ENCODE measurements at regions of chr7 and their contacts with region 1.

Region 1: GRCh38 chr7:27150568-27151340 is 1.6 kb downstream of the HOXA3 start:
- DNase-seq: peak; percentile 81 to 91
- ATAC-seq: peak; percentile 92 to 93
- H3K4me3 ChIP-seq: peak overlapping the region; percentile 49
- H3K27ac ChIP-seq: peak overlapping the region; percentile 88 to 90
- H3K4me1 ChIP-seq: peaks cover 16% of the 10 kb centered on the region
- CTCF ChIP-seq: peak; percentile 78
- EP300 ChIP-seq: no peak
- POLR2A ChIP-seq: peak; percentile 56
- RAD21 ChIP-seq: peak; percentile 31 to 55; a peak in 4 of 5 replicates

Region 2: DNA sequence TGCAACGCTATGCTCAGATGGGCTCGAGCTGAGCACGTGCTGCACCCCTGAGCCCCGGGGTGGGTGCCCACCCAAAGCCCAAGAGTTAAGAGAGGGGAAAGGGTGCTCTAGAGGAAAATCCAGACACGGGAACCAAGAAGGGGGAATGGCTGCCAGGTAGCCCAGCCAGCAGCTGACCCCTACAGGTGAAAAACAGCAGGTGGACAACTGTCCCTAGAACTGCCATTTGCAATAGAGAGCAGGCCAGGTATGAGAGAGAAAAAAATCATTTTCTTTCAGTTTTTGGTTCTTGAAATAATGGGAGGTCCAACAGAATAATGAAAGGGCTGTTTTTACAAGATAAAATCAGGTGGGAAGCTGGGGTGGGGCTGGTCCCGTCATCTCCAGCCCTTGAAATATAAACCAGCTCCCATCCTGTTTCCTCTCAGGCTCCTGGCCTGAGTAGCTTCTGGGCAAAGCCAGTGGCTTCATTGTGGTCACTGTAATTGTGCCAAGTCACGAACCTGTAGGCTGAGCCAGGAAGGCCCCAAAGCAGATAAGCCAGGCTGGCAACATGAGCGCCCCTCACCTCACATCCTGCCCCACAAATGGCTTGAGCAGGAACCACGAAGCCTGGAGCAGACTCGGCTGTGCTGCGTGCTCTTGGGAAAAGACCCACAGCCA is 601.3 kb before region 1 on chr7:
- CTCF ChIA-PET with region 1: no interaction called
- POLR2A ChIA-PET with region 1: no interaction called
- DNase-seq: no peak
- ATAC-seq: no peak
- H3K4me3 ChIP-seq: no peak overlapping the region
- H3K27ac ChIP-seq: no peak overlapping the region
- H3K4me1 ChIP-seq: no peaks in the 10 kb centered on the region
- CTCF ChIP-seq: no peak
- EP300 ChIP-seq: no peak
- POLR2A ChIP-seq: no peak
- RAD21 ChIP-seq: no peak

Region 3: DNA sequence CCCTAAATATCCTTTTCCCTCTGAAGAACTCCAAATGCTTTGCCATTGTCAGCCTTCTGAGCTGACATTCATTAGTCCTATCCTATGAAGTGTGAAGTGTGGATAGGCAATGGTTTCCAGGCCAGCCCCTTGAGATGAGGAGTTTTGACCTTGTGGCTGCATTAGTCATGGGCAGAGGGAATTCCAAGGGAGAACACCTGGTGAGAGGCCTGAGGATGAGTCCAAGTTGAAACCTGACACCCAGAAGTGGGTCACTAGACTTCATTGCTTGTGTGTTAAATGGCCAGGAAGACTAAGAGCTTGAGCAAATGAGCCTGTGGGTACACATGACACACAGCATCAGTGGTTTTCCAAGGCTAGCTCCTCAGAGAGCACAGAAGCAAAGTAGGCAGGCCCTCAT is 547.1 kb before region 1 on chr7:
- CTCF ChIA-PET with region 1: no interaction called
- POLR2A ChIA-PET with region 1: no interaction called
- DNase-seq: peak in 1 of 2 experiments; percentile 17
- ATAC-seq: no peak; a peak in 1 of 6 replicates
- H3K4me3 ChIP-seq: no peak overlapping the region
- H3K27ac ChIP-seq: no peak overlapping the region
- H3K4me1 ChIP-seq: no peaks in the 10 kb centered on the region
- CTCF ChIP-seq: no peak
- EP300 ChIP-seq: no peak
- POLR2A ChIP-seq: no peak
- RAD21 ChIP-seq: no peak

Region 4: DNA sequence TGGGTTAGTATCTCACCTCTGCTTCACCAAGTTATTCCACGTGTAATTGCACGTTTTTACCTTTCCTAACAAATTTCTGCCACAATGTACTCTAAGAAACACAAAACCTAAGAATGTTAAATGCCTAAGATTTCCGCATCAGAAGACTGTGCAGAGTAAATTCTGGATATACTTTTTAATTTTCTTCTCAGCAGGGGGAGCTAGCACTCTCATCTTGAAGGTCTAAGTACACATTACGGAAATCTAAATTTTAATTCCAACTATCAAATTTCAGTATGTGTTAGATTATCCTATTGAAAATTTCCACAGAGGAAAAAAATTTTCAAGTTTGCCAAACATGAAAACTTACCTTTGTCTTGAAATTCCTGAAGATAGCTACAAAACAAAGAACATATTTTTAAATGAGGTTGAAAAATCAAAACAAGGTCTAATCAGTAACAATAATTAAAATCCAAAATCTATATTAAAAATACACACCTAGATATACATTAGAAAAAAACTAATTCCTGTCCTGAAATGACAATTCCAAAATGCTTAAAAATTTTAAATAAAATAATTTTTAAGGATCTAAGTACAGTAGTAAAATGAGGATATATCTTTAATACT is 296.9 kb before region 1 on chr7:
- CTCF ChIA-PET with region 1: interaction called, 71 read pairs
- POLR2A ChIA-PET with region 1: no interaction called
- DNase-seq: peak in 1 of 2 experiments; percentile 67
- ATAC-seq: peak; percentile 78 to 86; a peak in 5 of 6 replicates
- H3K4me3 ChIP-seq: no peak overlapping the region
- H3K27ac ChIP-seq: no peak overlapping the region
- H3K4me1 ChIP-seq: peaks cover 9% of the 10 kb centered on the region
- CTCF ChIP-seq: peak; percentile 86
- EP300 ChIP-seq: no peak
- POLR2A ChIP-seq: no peak
- RAD21 ChIP-seq: peak; percentile 79 to 80

Region 5: GRCh38 chr7:27179503-27180430 is 29.0 kb after region 1 on chr7:
- CTCF ChIA-PET with region 1: interaction called, 12 read pairs
- POLR2A ChIA-PET with region 1: no interaction called
- DNase-seq: peak; percentile 85 to 95
- ATAC-seq: peak; percentile 85 to 94
- H3K4me3 ChIP-seq: peak overlapping the region; percentile 56
- H3K27ac ChIP-seq: peak overlapping the region; percentile 84 to 87
- H3K4me1 ChIP-seq: peaks cover 21% of the 10 kb centered on the region
- CTCF ChIP-seq: peak; percentile 84
- EP300 ChIP-seq: no peak
- POLR2A ChIP-seq: peak; percentile 31; the same call in 1 of the 2 replicates
- RAD21 ChIP-seq: peak; percentile 10 to 36; a peak in 1 of 5 replicates